Transverse colon (tissue), 4 donors: ENCODE measurements at regions of chr12 and their contacts with region 1.

Region 1: DNA sequence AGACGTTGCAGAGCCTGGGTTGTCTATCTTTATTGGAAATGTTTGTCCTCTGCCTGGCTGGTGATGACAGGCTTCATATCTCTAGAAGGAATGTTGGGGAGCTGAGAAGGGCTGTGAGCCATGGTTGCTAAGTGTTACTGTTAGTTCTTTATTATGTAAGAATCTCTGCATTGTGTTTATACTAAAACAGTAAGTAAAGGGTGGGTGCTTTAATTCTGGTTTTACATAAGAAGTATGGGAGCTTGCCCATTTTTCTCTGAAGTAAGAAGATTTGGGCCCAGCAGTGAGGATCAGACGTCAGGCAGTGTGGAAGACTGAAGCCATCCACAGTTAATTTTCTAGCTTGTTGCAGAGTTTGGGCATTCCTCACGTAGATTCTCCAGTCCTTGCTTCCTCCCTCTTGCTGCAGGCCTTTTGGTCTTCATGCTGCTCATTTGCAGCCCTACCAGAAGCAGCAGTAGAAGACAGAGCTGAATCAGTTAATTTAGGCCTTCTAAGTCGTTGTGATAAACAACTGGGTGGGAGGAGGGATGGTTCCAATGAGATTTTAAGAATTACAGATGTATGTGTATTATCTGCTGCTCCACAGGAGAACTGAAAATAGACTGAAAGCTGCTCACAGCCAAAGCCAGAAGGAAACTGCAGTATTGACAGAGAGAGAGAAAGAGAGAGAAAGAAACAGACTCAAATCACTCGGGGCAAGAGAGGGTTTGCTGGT is 21.4 kb downstream of the WNT5B start:
- DNase-seq: no peak
- H3K4me3 ChIP-seq: no peak overlapping the region
- H3K27ac ChIP-seq: peak overlapping the region; percentile 21 to 54 (median 44)
- H3K4me1 ChIP-seq: peaks cover 0 to 17% (median 0%) of the 10 kb centered on the region in 4 donors
- H3K27me3 ChIP-seq: no peaks in the 10 kb centered on the region
- CTCF ChIP-seq: no peak
- EP300 ChIP-seq: no peak
- POLR2A ChIP-seq: no peak

Region 2: DNA sequence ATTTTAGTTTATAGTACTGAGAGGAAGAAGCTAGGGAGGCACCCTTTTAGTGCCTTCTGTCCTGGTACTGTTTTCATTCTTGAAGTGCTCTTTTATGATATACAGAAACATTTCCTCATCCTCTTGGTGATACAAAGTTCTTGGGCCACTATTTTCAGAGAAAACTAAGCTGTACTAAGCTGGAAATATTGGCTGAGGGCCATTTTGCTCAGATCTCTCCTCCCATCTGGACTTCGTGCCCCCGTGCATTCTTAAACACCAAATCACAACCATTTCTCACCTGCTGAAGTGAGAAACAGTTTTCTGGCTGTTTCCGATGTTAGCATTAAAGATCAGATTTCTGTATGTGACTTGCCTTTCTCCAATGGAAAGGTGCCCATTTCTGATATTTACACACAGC is 215.0 kb before region 1 on chr12:
- in situ Hi-C with region 1: no loop called
- intact Hi-C with region 1: no loop called
- DNase-seq: peak; percentile 41
- H3K4me3 ChIP-seq: peak overlapping the region in 1 of 4 donors; percentile 10
- H3K27ac ChIP-seq: peak overlapping the region; percentile 65 to 81 (median 74)
- H3K4me1 ChIP-seq: peaks cover 0 to 19% (median 16%) of the 10 kb centered on the region in 4 donors
- H3K27me3 ChIP-seq: no peaks in the 10 kb centered on the region
- CTCF ChIP-seq: no peak
- EP300 ChIP-seq: no peak
- POLR2A ChIP-seq: peak; percentile 45

Region 3: DNA sequence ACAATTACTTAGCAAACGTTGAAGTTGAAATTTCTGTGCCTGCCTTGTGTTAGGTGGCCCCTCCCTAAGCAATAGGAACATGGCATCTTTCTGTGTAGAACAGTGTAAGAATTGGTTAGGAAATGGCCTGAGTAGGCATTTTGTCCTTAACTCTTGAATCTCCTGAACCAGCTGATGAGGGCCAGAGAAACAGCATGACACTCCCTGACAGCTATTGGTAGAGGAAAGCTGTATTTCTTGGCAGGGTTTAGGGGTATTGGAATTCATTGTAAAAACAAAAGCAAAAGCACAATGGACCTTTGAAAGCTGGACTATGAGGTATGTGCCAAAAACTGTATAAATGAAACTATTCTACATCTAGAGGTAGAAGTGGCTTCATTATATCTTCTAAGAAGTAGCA is 129.4 kb after region 1 on chr12:
- in situ Hi-C with region 1: loop called in 1 of 4 experiments (anchors 10 kb)
- intact Hi-C with region 1: no loop called
- DNase-seq: no peak
- H3K4me3 ChIP-seq: no peak overlapping the region
- H3K27ac ChIP-seq: no peak overlapping the region
- H3K4me1 ChIP-seq: peaks cover 0 to 8% (median 0%) of the 10 kb centered on the region in 4 donors
- H3K27me3 ChIP-seq: no peaks in the 10 kb centered on the region
- CTCF ChIP-seq: no peak
- EP300 ChIP-seq: no peak
- POLR2A ChIP-seq: no peak

Region 4: DNA sequence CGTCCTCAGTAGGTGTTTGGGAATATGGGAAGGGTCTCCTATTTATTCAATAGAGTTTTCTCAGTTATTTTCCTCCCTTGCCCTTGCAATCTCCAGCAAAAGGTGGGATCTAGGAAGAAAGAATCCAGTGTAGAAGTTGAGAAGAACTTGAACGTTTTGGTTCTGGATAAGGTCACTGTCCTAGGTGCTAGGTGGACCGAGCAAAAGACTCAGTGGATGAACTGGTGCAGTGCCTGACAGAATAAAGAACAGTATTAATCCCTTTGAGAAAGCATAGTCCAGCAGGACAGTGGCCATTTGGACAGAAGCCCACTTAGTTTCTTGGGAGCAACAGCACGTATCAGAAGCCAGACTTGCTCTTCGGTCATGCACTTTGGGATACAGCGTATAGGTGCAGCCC is 137.3 kb after region 1 on chr12:
- in situ Hi-C with region 1: loop called (anchors 5 to 10 kb)
- intact Hi-C with region 1: loop called (anchors 2 kb)
- DNase-seq: no peak
- H3K4me3 ChIP-seq: no peak overlapping the region
- H3K27ac ChIP-seq: no peak overlapping the region
- H3K4me1 ChIP-seq: no peaks in the 10 kb centered on the region
- H3K27me3 ChIP-seq: no peaks in the 10 kb centered on the region
- CTCF ChIP-seq: no peak
- EP300 ChIP-seq: no peak
- POLR2A ChIP-seq: no peak

Region 5: GRCh38 chr12:1795785-1796514 is 145.5 kb after region 1 on chr12:
- in situ Hi-C with region 1: no loop called
- intact Hi-C with region 1: loop called (anchors 2 kb)
- DNase-seq: peak; percentile 96
- H3K4me3 ChIP-seq: peak overlapping the region; percentile 55 to 72 (median 62)
- H3K27ac ChIP-seq: peak overlapping the region; percentile 87 to 90 (median 88)
- H3K4me1 ChIP-seq: peaks cover 10 to 25% (median 16%) of the 10 kb centered on the region in 4 donors
- H3K27me3 ChIP-seq: no peaks in the 10 kb centered on the region
- CTCF ChIP-seq: peak; percentile 72 to 99 (median 95)
- EP300 ChIP-seq: no peak
- POLR2A ChIP-seq: peak; percentile 82

Region 6: GRCh38 chr12:1949771-1950470 is 299.5 kb after region 1 on chr12:
- in situ Hi-C with region 1: no loop called
- intact Hi-C with region 1: no loop called
- DNase-seq: no peak
- H3K4me3 ChIP-seq: no peak overlapping the region
- H3K27ac ChIP-seq: peak overlapping the region; percentile 68 to 86 (median 82)
- H3K4me1 ChIP-seq: peaks cover 6 to 21% (median 10%) of the 10 kb centered on the region in 4 donors
- H3K27me3 ChIP-seq: no peaks in the 10 kb centered on the region
- CTCF ChIP-seq: no peak
- EP300 ChIP-seq: no peak
- POLR2A ChIP-seq: no peak